ENCODE measurements at regions of chr1 and their contacts with region 1.

Region 1: GRCh38 chr1:185813401-185813979 is 79.3 kb downstream of the HMCN1 start:
- DNase-seq: peak; percentile 11
- H3K4me3 ChIP-seq: no peak overlapping the region
- H3K27ac ChIP-seq: no peak overlapping the region
- H3K4me1 ChIP-seq: no peaks in the 10 kb centered on the region
- H3K27me3 ChIP-seq: no peaks in the 10 kb centered on the region
- CTCF ChIP-seq: peak; percentile 49 to 61 (median 54)
- EP300 ChIP-seq: no peak
- POLR2A ChIP-seq: no peak

Region 2: DNA sequence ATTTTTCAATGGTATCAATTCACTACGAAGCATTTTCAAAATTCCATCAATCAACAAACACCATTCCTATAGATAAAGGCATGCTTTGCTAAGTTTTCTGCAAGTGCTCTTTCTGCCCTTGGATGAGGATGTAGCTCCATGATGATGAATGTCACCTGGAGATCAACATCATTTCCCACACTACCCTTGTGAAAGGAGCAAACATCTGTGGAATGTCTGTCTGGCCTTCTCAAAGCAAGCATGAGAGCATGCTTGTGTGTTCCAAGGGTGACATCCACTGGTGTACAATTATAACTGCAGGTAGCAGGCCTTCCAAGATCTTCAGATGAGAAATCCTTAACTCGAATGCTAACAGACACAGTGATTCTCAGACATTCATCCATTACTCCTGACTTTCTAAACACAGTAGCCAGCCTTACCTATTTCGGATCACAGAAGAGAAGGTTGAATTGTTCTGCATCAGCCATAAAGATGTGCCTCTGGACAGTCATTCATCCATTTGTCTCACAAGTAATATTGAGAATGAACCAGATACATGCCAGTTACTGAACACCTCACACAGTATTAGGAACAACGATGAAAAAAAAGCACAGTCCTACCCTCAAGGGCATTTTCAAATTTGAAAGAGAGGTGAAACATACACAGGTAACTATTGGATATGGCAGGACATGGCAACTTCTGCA is 399.2 kb after region 1 on chr1:
- in situ Hi-C with region 1: loop called in 3 of 4 experiments (anchors 10 to 25 kb)
- intact Hi-C with region 1: no loop called
- DNase-seq: peak; percentile 11
- H3K4me3 ChIP-seq: no peak overlapping the region
- H3K27ac ChIP-seq: no peak overlapping the region
- H3K4me1 ChIP-seq: no peaks in the 10 kb centered on the region
- H3K27me3 ChIP-seq: no peaks in the 10 kb centered on the region
- CTCF ChIP-seq: peak; percentile 60 to 84 (median 71)
- EP300 ChIP-seq: no peak
- POLR2A ChIP-seq: no peak

Region 3: GRCh38 chr1:186225096-186225495 is 411.6 kb after region 1 on chr1:
- in situ Hi-C with region 1: loop called in 3 of 4 experiments (anchors 10 to 25 kb)
- intact Hi-C with region 1: no loop called
- DNase-seq: no peak
- H3K4me3 ChIP-seq: no peak overlapping the region
- H3K27ac ChIP-seq: no peak overlapping the region
- H3K4me1 ChIP-seq: no peaks in the 10 kb centered on the region
- H3K27me3 ChIP-seq: no peaks in the 10 kb centered on the region
- CTCF ChIP-seq: no peak
- EP300 ChIP-seq: no peak
- POLR2A ChIP-seq: no peak